ENCODE measurements at regions of chr12 and their contacts with region 1.

Region 1: GRCh38 chr12:49342066-49342913 is 4.4 kb upstream of the DNAJC22 start:
- DNase-seq: peak; percentile 96
- ATAC-seq: peak; percentile 74
- H3K4me3 Mint-ChIP-seq: peak overlapping the region; percentile 67
- H3K27ac Mint-ChIP-seq: no peak overlapping the region
- H3K4me1 Mint-ChIP-seq: peaks cover 59% of the 10 kb centered on the region
- H3K27me3 Mint-ChIP-seq: peaks cover 99% of the 10 kb centered on the region
- CTCF ChIP-seq: peak; percentile 92

Region 2: GRCh38 chr12:49225556-49226181 is 116.6 kb before region 1 on chr12:
- CTCF ChIA-PET with region 1: no interaction called
- POLR2A ChIA-PET with region 1: no interaction called
- DNase-seq: no peak
- ATAC-seq: peak; percentile 77; the same call in 1 of the 2 replicates
- H3K4me3 Mint-ChIP-seq: no peak overlapping the region
- H3K27ac Mint-ChIP-seq: 0 out of 2 replicates have a peak overlapping the region, but pooled peaks have one; percentile 14
- H3K4me1 Mint-ChIP-seq: no peaks in the 10 kb centered on the region
- H3K27me3 Mint-ChIP-seq: no peaks in the 10 kb centered on the region
- CTCF ChIP-seq: no peak

Region 3: DNA sequence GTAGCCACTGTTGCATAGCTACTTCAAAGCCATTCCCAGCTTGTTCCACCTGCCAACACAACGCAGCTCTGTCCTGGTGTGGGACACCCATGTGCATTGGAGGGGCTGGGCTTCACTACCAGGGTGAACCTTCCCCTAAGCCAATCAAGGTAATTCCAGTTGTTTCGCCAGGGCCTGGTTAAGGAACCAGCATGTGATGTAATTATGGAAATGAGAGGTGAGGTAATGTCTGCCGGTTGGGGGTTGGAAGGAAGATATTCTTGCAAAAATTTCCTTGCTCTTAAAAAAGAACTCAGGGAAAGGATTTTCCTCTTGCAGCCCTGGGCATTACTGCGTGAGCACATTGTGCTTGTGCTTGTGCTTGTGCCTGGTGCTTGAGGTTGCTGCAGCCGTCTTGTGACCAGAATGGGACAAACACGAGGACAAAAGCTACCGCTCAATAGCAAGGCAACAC is 62.6 kb before region 1 on chr12:
- CTCF ChIA-PET with region 1: interaction called, 24 read pairs
- POLR2A ChIA-PET with region 1: no interaction called
- DNase-seq: no peak
- ATAC-seq: peak; percentile 53
- H3K4me3 Mint-ChIP-seq: no peak overlapping the region
- H3K27ac Mint-ChIP-seq: no peak overlapping the region
- H3K4me1 Mint-ChIP-seq: peaks cover 23% of the 10 kb centered on the region
- H3K27me3 Mint-ChIP-seq: no peaks in the 10 kb centered on the region
- CTCF ChIP-seq: no peak

Region 4: DNA sequence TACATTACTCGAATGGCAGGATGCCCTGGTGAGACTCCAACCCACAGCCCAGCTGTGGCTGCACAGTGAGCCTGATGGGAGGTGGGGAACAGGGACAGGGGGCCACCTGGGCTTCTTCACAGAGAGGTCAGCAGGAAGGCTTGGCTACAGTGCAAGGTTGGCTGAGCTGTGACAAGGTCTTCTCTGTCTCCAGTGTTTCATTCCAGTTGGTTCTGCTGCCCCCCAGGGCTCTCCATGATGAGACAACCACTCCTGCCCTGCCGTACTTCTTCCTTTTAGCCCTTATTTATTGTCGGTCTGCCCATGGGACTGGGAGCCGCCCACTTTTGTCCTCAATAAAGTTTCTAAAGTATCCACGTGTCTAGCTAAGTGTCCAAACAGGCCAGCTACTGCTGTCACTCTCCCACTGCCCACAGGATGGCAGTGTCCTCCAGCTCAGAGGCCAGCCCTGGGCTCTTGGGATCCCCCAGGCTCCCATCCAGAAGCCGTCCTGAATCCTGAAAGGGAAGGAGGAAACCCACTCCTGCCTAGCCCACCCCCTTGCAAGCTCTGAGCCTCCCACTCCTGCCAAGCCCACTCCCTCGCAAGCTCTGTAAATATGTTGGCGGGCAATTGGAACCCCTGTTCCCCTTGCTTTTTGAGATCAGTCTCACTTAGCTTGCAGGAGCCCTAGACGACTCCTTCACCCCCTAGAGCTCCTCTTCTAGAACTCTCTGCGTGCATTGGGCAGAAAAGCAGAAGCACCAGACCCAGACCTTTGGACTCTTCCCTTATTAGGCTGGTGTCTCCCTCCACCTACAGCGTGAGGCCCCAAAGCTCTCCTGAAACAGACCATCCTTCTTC is 10.7 kb before region 1 on chr12:
- CTCF ChIA-PET with region 1: interaction called, 234 read pairs
- POLR2A ChIA-PET with region 1: interaction called, 18 read pairs
- DNase-seq: peak; percentile 77
- ATAC-seq: peak; percentile 76
- H3K4me3 Mint-ChIP-seq: peak overlapping the region; percentile 77; the same call in 1 of the 2 replicates
- H3K27ac Mint-ChIP-seq: no peak overlapping the region
- H3K4me1 Mint-ChIP-seq: peaks cover 20% of the 10 kb centered on the region
- H3K27me3 Mint-ChIP-seq: peaks cover 52% of the 10 kb centered on the region
- CTCF ChIP-seq: peak; percentile 42; the same call in 1 of the 2 replicates

Region 5: GRCh38 chr12:49388682-49389386 is 46.5 kb after region 1 on chr12:
- CTCF ChIA-PET with region 1: interaction called, 12 read pairs
- POLR2A ChIA-PET with region 1: no interaction called
- DNase-seq: peak; percentile 91
- ATAC-seq: peak; percentile 99
- H3K4me3 Mint-ChIP-seq: peak overlapping the region; percentile 33; the same call in 1 of the 2 replicates
- H3K27ac Mint-ChIP-seq: peak overlapping the region; percentile 80; the same call in 1 of the 2 replicates
- H3K4me1 Mint-ChIP-seq: peaks cover 9% of the 10 kb centered on the region
- H3K27me3 Mint-ChIP-seq: no peaks in the 10 kb centered on the region
- CTCF ChIP-seq: peak; percentile 28; the same call in 1 of the 2 replicates

Region 6: DNA sequence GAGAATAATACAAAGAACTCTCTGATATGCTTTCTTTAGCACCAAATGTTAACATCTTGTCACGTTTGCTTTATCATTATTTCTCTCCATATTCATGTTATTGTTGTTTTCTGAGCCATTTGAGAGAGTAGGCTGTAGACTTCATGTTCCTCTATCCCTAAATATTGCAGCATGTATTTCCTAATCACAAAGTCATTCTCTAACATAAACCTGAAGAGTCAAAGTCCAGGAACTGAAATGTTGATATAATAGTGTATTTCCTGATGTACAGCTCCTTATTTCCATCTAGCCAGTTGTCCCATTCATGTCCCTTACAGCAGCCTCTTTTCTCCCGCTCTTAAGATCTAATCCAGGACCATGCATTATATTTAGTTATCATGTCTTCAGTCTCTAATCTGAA is 97.7 kb after region 1 on chr12:
- CTCF ChIA-PET with region 1: no interaction called
- POLR2A ChIA-PET with region 1: no interaction called
- DNase-seq: no peak
- ATAC-seq: no peak
- H3K4me3 Mint-ChIP-seq: no peak overlapping the region
- H3K27ac Mint-ChIP-seq: no peak overlapping the region
- H3K4me1 Mint-ChIP-seq: peaks cover 8% of the 10 kb centered on the region
- H3K27me3 Mint-ChIP-seq: no peaks in the 10 kb centered on the region
- CTCF ChIP-seq: no peak

Region 7: DNA sequence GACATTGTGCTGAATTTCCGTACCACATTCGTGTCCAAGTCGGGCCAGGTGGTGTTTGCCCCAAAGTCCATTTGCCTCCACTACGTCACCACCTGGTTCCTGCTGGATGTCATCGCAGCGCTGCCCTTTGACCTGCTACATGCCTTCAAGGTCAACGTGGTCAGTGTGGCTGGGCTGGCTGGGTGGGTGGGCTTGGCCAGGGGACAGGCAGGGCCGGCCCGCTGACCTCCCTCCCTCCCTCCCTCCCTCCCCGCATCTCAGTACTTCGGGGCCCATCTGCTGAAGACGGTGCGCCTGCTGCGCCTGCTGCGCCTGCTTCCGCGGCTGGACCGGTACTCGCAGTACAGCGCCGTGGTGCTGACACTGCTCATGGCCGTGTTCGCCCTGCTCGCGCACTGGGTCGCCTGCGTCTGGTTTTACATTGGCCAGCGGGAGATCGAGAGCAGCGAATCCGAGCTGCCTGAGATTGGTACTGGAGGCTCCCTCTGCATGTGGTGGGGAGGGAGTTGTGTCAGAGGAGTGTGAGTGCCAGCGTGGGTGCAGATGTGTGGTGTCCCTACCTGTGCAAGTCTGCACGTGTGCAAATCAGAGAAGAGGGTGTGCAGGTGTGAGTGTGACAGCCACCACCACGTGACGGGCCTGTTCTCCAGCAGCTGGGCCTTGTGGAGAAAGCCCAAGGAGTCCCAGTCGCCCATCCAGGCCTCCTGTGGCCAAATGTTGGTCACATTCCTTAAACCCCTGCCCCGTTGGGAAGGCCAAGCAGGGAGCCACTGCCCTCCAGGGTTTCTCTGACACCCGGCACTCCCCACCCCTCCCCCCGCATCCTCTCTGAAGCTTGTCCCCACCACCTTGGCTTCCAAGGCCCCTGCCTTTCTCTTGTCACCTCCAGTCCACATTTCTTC is 201.9 kb after region 1 on chr12:
- CTCF ChIA-PET with region 1: interaction called, 34 read pairs
- POLR2A ChIA-PET with region 1: no interaction called
- DNase-seq: peak; percentile 47
- ATAC-seq: peak; percentile 41
- H3K4me3 Mint-ChIP-seq: peak overlapping the region; percentile 68
- H3K27ac Mint-ChIP-seq: no peak overlapping the region
- H3K4me1 Mint-ChIP-seq: peaks cover 32% of the 10 kb centered on the region
- H3K27me3 Mint-ChIP-seq: peaks cover 100% of the 10 kb centered on the region
- CTCF ChIP-seq: no peak

Region 8: GRCh38 chr12:49623142-49623904 is 281.0 kb after region 1 on chr12 and contains the start of gene PRPF40B:
- CTCF ChIA-PET with region 1: interaction called, 15 read pairs
- POLR2A ChIA-PET with region 1: no interaction called
- DNase-seq: peak; percentile 92
- ATAC-seq: peak; percentile 84
- H3K4me3 Mint-ChIP-seq: peak within 1 kb of the TSS; percentile 90
- H3K27ac Mint-ChIP-seq: peak within 1 kb of the TSS; percentile 92
- H3K4me1 Mint-ChIP-seq: peaks cover 35% of the 10 kb centered on the region
- H3K27me3 Mint-ChIP-seq: no peaks in the 10 kb centered on the region
- CTCF ChIP-seq: peak; percentile 47; the same call in 1 of the 2 replicates
- total RNA-seq, gene PRPF40B: 38.0 to 46.0 TPM (median 40.5 TPM) in 3 replicates